CD4-positive, alpha-beta memory T cell (primary cell): ENCODE measurements at regions of chr1 and their contacts with region 1.

Region 1: GRCh38 chr1:46718727-46719622 is at the start of gene EFCAB14:
- DNase-seq: peak; percentile 99 to 100 (median 99)
- H3K4me3 ChIP-seq: peak within 1 kb of the TSS; percentile 40 to 72
- H3K4me3 Mint-ChIP-seq: peak within 1 kb of the TSS; percentile 90 to 97 (median 92)
- H3K27ac ChIP-seq: peak within 1 kb of the TSS; percentile 88
- H3K27ac Mint-ChIP-seq: peak within 1 kb of the TSS; percentile 91 to 97 (median 95)
- H3K4me1 ChIP-seq: peaks cover 40% of the 10 kb centered on the region
- H3K4me1 Mint-ChIP-seq: peaks cover 31 to 53% (median 45%) of the 10 kb centered on the region in 4 donors
- H3K27me3 ChIP-seq: no peaks in the 10 kb centered on the region
- H3K27me3 Mint-ChIP-seq: no peaks in the 10 kb centered on the region
- total RNA-seq, gene EFCAB14: 96.7 to 98.5 TPM

Region 2: GRCh38 chr1:46303038-46303871 is 415.7 kb before region 1 on chr1 and contains the starts of genes LRRC41 and UQCRH:
- CTCF ChIA-PET with region 1: no interaction called
- POLR2A ChIA-PET with region 1: no interaction called
- intact Hi-C with region 1: loop called (anchors 2 kb)
- DNase-seq: peak; percentile 94 to 96 (median 94)
- H3K4me3 ChIP-seq: peak within 1 kb of the TSS; percentile 73 to 90
- H3K4me3 Mint-ChIP-seq: peak within 1 kb of the TSS; percentile 96 to 100 (median 98)
- H3K27ac ChIP-seq: peak within 1 kb of the TSS; percentile 94
- H3K27ac Mint-ChIP-seq: peak within 1 kb of the TSS; percentile 97 to 98 (median 98)
- H3K4me1 ChIP-seq: peaks cover 54% of the 10 kb centered on the region
- H3K4me1 Mint-ChIP-seq: peaks cover 26 to 64% (median 40%) of the 10 kb centered on the region in 4 donors
- H3K27me3 ChIP-seq: no peaks in the 10 kb centered on the region
- H3K27me3 Mint-ChIP-seq: no peaks in the 10 kb centered on the region
- total RNA-seq, gene LRRC41: 31.8 to 32.0 TPM
- total RNA-seq, gene UQCRH: 123 to 128 TPM

Region 3: DNA sequence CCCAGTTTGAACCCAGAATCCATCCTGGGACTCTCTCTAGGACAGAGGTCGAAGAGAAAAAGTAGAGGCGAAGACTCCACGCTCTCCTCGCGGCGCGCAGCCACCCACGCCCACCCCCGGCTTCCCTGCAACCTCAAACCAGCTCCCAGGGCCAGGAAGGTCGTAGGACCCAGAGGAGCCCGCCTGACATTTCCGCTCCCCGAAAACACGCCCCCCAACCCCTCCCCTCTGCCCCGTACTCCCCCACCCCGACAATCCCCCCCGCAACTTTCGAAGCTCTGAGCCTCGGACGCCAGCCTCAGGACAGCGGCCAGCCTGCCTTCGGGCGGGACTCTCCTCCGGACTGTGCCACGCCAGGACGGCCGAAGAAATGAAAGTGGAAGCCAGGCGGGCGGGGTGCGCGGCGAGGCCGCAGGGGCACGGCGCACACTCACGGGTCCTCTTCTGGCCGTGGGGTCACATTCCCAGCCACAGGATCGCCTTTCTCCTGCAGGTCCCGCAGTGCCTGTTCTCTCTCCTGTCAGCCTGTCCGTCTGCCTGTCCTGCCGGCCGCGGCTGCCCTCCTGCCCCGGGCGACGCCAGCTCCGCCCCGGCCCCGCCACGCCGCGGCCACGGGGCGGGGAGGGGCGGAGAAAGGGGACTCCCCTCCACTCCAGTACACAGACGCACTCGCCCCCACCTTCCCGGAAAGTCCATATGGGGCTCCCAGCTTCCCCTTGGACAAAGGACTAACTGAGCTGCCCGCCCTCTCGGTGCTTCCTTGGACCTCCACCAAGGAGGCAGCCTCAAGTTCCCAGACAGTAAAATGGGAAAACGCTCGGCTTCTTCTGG is 102.5 kb before region 1 on chr1 and contains the start of gene MOB3C:
- CTCF ChIA-PET with region 1: interaction called, 3 read pairs
- POLR2A ChIA-PET with region 1: interaction called, 10 read pairs
- intact Hi-C with region 1: loop called (anchors 5 kb)
- DNase-seq: peak; percentile 62 to 74 (median 63)
- H3K4me3 ChIP-seq: peak within 1 kb of the TSS; percentile 82 to 96
- H3K4me3 Mint-ChIP-seq: peak within 1 kb of the TSS; percentile 92 to 96 (median 94)
- H3K27ac ChIP-seq: peak within 1 kb of the TSS; percentile 81
- H3K27ac Mint-ChIP-seq: peak within 1 kb of the TSS; percentile 87 to 97 (median 94)
- H3K4me1 ChIP-seq: peaks cover 51% of the 10 kb centered on the region
- H3K4me1 Mint-ChIP-seq: peaks cover 22 to 57% (median 41%) of the 10 kb centered on the region in 4 donors
- H3K27me3 ChIP-seq: no peaks in the 10 kb centered on the region
- H3K27me3 Mint-ChIP-seq: no peaks in the 10 kb centered on the region
- total RNA-seq, gene MOB3C: 27.8 to 29.5 TPM

Region 4: DNA sequence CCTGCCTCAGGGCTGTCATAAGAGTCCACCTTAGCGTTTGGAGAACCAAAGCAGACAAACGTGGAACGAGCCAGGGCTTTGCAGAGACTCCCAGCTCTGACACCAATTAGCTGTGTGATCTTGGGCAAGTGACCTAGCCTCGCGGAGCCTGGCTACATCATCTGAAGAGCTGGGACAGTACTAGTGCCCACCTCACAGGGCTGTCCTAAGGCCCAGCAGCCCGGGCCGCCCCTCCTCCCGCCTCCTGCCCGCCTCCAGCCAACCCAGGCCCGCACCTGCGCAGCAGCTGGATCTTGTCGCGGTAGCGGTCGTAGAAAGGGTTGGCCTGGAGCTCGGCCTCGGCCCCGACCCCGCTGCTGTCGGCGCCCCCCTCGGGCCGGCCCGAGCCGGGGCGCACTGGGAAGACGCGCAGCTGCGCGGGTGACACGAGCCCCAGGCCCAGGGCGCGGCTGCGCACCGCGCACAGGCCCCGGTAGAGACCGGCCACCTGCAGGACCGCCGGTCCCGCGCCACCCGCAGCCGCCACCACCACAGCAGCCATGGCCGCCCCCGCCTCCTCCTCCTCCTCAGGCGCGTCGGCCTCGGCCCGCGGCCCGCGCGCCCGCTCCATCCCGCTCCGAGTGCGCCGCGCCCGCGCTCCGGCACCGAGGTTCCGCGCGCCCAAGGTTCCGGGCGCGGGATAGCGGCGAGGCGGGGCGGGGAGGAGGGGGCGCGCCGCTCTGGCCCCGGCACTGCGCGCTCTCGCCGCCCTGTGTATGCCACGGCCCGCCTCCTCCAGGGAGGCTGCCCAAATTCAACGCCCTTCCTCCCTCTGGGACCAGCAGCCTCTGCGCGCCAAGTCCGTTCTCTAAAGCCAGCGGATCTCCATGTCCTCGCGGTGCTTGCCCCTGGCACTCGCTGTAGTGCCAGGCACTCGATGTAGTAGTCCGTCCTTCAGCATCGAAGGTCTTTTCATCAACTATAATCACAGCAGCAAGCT is 50.9 kb before region 1 on chr1 and contains the start of gene ATPAF1:
- CTCF ChIA-PET with region 1: no interaction called
- POLR2A ChIA-PET with region 1: interaction called, 21 read pairs
- intact Hi-C with region 1: loop called (anchors 1 kb)
- DNase-seq: peak; percentile 62 to 72 (median 68)
- H3K4me3 ChIP-seq: peak within 1 kb of the TSS; percentile 44 to 66
- H3K4me3 Mint-ChIP-seq: peak within 1 kb of the TSS in 7 of 8 donors; percentile 85 to 91 (median 88)
- H3K27ac ChIP-seq: peak within 1 kb of the TSS; percentile 48
- H3K27ac Mint-ChIP-seq: peak within 1 kb of the TSS; percentile 48 to 85 (median 78)
- H3K4me1 ChIP-seq: peaks cover 23% of the 10 kb centered on the region
- H3K4me1 Mint-ChIP-seq: peaks cover 15 to 26% (median 21%) of the 10 kb centered on the region in 4 donors
- H3K27me3 ChIP-seq: no peaks in the 10 kb centered on the region
- H3K27me3 Mint-ChIP-seq: no peaks in the 10 kb centered on the region
- total RNA-seq, gene ATPAF1: 32.9 to 37.6 TPM

Region 5: DNA sequence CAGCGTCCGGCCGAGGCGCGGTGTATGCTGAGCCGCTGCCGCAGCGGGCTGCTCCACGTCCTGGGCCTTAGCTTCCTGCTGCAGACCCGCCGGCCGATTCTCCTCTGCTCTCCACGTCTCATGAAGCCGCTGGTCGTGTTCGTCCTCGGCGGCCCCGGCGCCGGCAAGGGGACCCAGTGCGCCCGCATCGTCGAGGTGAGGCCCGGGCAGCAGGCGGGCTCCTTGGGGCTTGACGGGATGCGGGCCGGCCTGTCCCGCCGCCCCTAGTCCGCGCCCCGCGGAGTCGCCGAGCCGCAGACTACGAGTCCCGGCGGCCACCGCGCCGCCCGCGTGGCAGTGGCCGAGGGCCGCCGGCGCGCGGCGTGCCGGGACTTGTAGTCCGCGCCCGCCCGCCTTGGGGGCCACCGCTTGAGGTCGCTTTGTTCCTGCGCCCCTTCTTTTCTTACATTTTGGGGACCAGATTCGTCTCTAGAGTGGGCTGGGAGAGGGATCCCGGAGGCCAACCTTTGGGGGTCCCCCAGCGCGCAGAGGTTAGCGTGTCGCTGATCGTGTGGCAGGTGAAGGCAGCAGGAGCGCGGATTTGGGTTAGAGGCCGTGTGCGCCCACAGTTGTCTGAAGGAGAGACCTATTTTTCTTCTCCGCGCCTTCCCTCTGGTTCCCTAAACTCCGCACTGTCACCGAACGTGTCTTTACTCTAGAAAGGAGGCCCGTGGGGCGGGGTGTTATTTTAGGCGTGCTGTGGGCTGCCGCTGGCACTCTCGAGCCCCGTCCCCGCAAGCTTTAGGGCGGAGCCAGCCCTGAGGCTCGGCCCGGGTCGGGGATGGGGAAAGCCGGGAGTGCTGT is 615.2 kb after region 1 on chr1:
- CTCF ChIA-PET with region 1: no interaction called
- POLR2A ChIA-PET with region 1: no interaction called
- intact Hi-C with region 1: loop called (anchors 10 kb)
- DNase-seq: peak; percentile 74 to 85 (median 79)
- H3K4me3 ChIP-seq: peak overlapping the region; percentile 86 to 99
- H3K4me3 Mint-ChIP-seq: peak overlapping the region; percentile 91 to 94 (median 93)
- H3K27ac ChIP-seq: peak overlapping the region; percentile 88
- H3K27ac Mint-ChIP-seq: peak overlapping the region in 6 of 7 donors; percentile 90 to 96 (median 92)
- H3K4me1 ChIP-seq: peaks cover 40% of the 10 kb centered on the region
- H3K4me1 Mint-ChIP-seq: peaks cover 10 to 28% (median 15%) of the 10 kb centered on the region in 4 donors
- H3K27me3 ChIP-seq: no peaks in the 10 kb centered on the region
- H3K27me3 Mint-ChIP-seq: no peaks in the 10 kb centered on the region